Mammary epithelial cell (primary cell): ENCODE measurements at regions of chr11 and their contacts with region 1.

Region 1: GRCh38 chr11:34997952-34998528 is 81.6 kb downstream of the PDHX start:
- DNase-seq: peak; percentile 43
- H3K4me3 ChIP-seq: no peak overlapping the region
- H3K27ac ChIP-seq: peak overlapping the region; percentile 18
- H3K4me1 ChIP-seq: peaks cover 6% of the 10 kb centered on the region
- H3K27me3 ChIP-seq: no peaks in the 10 kb centered on the region
- CTCF ChIP-seq: peak; percentile 48

Region 2: DNA sequence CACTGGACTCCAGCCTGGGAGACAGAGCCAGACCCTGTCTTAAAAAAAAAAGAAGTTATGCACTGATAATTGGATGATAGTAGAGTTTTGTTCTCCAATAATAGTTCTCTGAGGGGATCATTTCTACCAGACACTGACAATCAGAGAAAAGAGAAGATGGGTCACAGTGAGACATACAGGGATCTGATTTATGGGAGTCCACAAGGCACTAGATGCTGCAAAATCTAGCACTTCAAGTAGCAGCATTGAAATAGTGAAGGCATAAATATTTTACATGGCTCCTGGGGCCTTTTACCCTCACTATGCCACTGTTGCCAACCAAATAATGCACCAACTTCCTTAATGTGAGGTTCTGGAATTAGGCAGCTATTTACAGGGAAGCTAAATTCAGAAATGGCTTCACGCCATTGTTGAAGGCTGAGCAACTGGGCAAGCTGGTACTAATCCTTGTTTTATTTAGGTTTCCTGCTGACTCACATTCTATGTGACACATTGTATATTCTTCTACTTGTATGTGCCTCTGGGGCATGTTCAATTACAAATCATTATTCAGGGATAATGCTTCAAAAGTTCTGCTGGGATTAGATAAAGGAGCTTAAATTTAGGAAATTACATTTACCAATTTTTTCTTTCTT is 602.0 kb before region 1 on chr11:
- CTCF ChIA-PET with region 1: no interaction called
- dilution Hi-C with region 1: no loop called
- in situ Hi-C with region 1: no loop called
- intact Hi-C with region 1: no loop called
- DNase-seq: peak; percentile 89
- H3K4me3 ChIP-seq: no peak overlapping the region
- H3K27ac ChIP-seq: peak overlapping the region; percentile 50
- H3K4me1 ChIP-seq: peaks cover 29% of the 10 kb centered on the region
- H3K27me3 ChIP-seq: no peaks in the 10 kb centered on the region
- CTCF ChIP-seq: no peak

Region 3: DNA sequence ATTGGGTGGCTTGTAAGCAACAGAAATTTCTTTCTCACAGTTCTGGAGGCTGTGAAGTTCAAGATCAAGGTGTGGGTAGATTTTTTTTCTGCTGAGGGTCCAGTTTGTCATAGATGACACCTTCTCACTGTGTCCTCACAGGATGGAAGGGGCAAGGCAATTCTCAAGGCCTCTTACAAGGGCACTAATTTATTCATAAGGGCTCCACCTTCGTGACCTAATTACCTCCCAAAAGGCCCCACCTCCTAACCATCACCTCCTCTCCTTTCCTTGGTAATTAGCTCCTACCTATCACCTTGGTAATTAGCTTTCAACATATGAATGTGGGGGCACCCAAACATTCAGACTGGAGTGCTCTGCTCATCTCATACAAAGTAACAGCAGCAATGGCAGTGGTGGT is 48.6 kb after region 1 on chr11:
- CTCF ChIA-PET with region 1: no interaction called
- dilution Hi-C with region 1: no loop called
- in situ Hi-C with region 1: no loop called
- intact Hi-C with region 1: no loop called
- DNase-seq: no peak
- H3K4me3 ChIP-seq: no peak overlapping the region
- H3K27ac ChIP-seq: no peak overlapping the region
- H3K4me1 ChIP-seq: peaks cover 7% of the 10 kb centered on the region
- H3K27me3 ChIP-seq: no peaks in the 10 kb centered on the region
- CTCF ChIP-seq: no peak

Region 4: GRCh38 chr11:35111161-35112055 is 113.4 kb after region 1 on chr11:
- CTCF ChIA-PET with region 1: no interaction called
- dilution Hi-C with region 1: no loop called
- in situ Hi-C with region 1: no loop called
- intact Hi-C with region 1: loop called (anchors 1 kb)
- DNase-seq: peak; percentile 99
- H3K4me3 ChIP-seq: peak overlapping the region in 1 of 3 experiments; percentile 17
- H3K27ac ChIP-seq: peak overlapping the region; percentile 94
- H3K4me1 ChIP-seq: peaks cover 70% of the 10 kb centered on the region
- H3K27me3 ChIP-seq: no peaks in the 10 kb centered on the region
- CTCF ChIP-seq: no peak

Region 5: GRCh38 chr11:35138943-35139721 is 141.1 kb after region 1 on chr11 and contains the start of gene CD44:
- CTCF ChIA-PET with region 1: interaction called, 5 read pairs
- dilution Hi-C with region 1: no loop called
- in situ Hi-C with region 1: loop called in 1 of 2 experiments (anchors 5 kb)
- intact Hi-C with region 1: loop called (anchors 1 kb)
- DNase-seq: peak; percentile 89
- H3K4me3 ChIP-seq: peak within 1 kb of the TSS; percentile 85 to 98 (median 88)
- H3K27ac ChIP-seq: peak within 1 kb of the TSS; percentile 95
- H3K4me1 ChIP-seq: peaks cover 29% of the 10 kb centered on the region
- H3K27me3 ChIP-seq: no peaks in the 10 kb centered on the region
- CTCF ChIP-seq: no peak
- total RNA-seq, gene CD44: 1,362 to 2,544 TPM

Region 6: DNA sequence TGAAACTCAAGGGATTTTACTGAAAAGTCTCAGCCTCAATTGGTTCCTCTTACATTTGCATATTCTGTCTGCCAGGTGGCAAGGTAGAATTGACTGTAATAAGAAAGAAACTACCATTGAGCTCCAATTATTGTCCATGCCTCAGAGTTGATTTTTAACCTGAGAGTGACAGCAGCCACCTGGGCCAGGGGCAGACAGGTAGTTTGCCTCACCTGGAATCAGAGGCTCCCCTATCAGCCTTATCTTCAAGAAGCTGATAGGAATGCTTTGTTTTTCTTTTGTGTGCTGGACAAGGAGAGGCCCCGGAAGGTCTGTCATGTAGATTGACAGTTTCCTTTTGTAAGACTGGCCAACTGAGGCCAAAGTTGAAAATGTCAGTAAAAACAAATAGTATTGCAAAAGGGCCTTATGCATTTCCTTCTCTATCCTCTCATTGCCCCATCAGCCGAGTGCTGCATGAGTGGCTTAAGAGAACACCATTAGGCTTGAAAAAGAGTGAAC is 175.0 kb after region 1 on chr11:
- CTCF ChIA-PET with region 1: no interaction called
- dilution Hi-C with region 1: no loop called
- in situ Hi-C with region 1: no loop called
- intact Hi-C with region 1: loop called (anchors 5 kb)
- DNase-seq: no peak
- H3K4me3 ChIP-seq: no peak overlapping the region
- H3K27ac ChIP-seq: no peak overlapping the region
- H3K4me1 ChIP-seq: peaks cover 51% of the 10 kb centered on the region
- H3K27me3 ChIP-seq: no peaks in the 10 kb centered on the region
- CTCF ChIP-seq: no peak

Region 7: GRCh38 chr11:35237860-35238715 is 240.0 kb after region 1 on chr11:
- CTCF ChIA-PET with region 1: no interaction called
- dilution Hi-C with region 1: no loop called
- in situ Hi-C with region 1: no loop called
- intact Hi-C with region 1: loop called (anchors 1 kb)
- DNase-seq: no peak
- H3K4me3 ChIP-seq: no peak overlapping the region
- H3K27ac ChIP-seq: no peak overlapping the region
- H3K4me1 ChIP-seq: peaks cover 19% of the 10 kb centered on the region
- H3K27me3 ChIP-seq: no peaks in the 10 kb centered on the region
- CTCF ChIP-seq: peak; percentile 79 to 91

Region 8: GRCh38 chr11:35305670-35306382 is 307.8 kb after region 1 on chr11:
- CTCF ChIA-PET with region 1: no interaction called
- dilution Hi-C with region 1: no loop called
- in situ Hi-C with region 1: no loop called
- intact Hi-C with region 1: loop called (anchors 5 kb)
- DNase-seq: no peak
- H3K4me3 ChIP-seq: no peak overlapping the region
- H3K27ac ChIP-seq: no peak overlapping the region
- H3K4me1 ChIP-seq: no peaks in the 10 kb centered on the region
- H3K27me3 ChIP-seq: no peaks in the 10 kb centered on the region
- CTCF ChIP-seq: peak; percentile 25 to 67